ENCODE measurements at regions of chr11 and their contacts with region 1.

Region 1: GRCh38 chr11:62831520-62832335 is at the start of gene STX5:
- DNase-seq: peak; percentile 98
- ATAC-seq: peak; percentile 91
- H3K4me3 Mint-ChIP-seq: peak within 1 kb of the TSS; percentile 100
- H3K27ac Mint-ChIP-seq: peak within 1 kb of the TSS; percentile 100
- H3K4me1 Mint-ChIP-seq: peaks cover 47% of the 10 kb centered on the region
- H3K27me3 Mint-ChIP-seq: no peaks in the 10 kb centered on the region
- CTCF ChIP-seq: no peak
- total RNA-seq, gene STX5: 58.4 and 71.5 TPM in 2 replicates

Region 2: DNA sequence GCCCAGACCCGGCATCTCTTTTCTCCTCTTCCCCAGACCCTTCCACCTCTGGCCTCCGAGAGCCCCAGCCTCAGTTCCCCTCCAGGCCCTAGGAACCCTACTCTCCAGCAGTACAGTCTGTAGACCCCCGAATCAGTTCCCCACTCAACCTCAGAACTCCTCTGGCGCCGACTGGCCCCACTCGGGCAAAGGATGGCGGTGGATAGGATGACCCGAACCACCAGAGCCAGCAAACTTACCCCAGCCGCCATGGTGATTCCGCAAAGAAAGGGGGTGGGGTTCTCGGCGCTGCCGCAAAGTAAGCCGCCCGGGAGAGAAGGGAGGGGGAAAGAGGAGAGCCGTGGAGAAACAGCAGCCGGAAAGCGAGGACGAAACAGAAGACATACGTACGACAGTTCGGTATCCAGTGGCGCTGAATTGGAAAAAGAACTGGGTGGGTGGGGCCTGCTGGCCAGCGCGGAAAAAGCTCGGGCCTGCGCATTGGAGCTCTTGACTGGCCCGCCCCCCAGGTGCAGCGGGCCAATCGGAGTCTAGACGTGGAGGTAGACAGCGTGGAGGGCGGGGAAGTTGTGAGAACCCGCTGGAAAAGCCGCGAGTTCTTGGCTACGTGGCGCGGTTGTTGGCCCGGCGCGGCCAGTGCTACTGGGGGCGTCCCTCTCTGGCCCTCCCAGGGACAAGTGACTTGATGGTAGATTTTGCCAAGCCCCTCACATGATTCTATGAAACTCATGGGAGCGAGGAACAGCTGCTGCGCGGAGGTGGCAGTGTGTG is 258.0 kb before region 1 on chr11 and contains the start of gene EEF1G:
- CTCF ChIA-PET with region 1: no interaction called
- POLR2A ChIA-PET with region 1: interaction called, 3 read pairs
- intact Hi-C with region 1: loop called (anchors 5 kb)
- DNase-seq: peak; percentile 92
- ATAC-seq: peak; percentile 94
- H3K4me3 Mint-ChIP-seq: peak within 1 kb of the TSS; percentile 97
- H3K27ac Mint-ChIP-seq: peak within 1 kb of the TSS; percentile 94
- H3K4me1 Mint-ChIP-seq: peaks cover 51% of the 10 kb centered on the region
- H3K27me3 Mint-ChIP-seq: no peaks in the 10 kb centered on the region
- CTCF ChIP-seq: no peak
- total RNA-seq, gene EEF1G: 2,373 and 2,524 TPM in 2 replicates

Region 3: GRCh38 chr11:62678770-62679696 is 152.7 kb before region 1 on chr11 and contains the start of gene UBXN1:
- CTCF ChIA-PET with region 1: no interaction called
- POLR2A ChIA-PET with region 1: interaction called, 10 read pairs
- intact Hi-C with region 1: no loop called
- DNase-seq: peak; percentile 77
- ATAC-seq: peak; percentile 74
- H3K4me3 Mint-ChIP-seq: peak within 1 kb of the TSS; percentile 91
- H3K27ac Mint-ChIP-seq: peak within 1 kb of the TSS; percentile 96
- H3K4me1 Mint-ChIP-seq: peaks cover 41% of the 10 kb centered on the region
- H3K27me3 Mint-ChIP-seq: no peaks in the 10 kb centered on the region
- CTCF ChIP-seq: no peak
- total RNA-seq, gene UBXN1: 204 and 205 TPM in 2 replicates

Region 4: DNA sequence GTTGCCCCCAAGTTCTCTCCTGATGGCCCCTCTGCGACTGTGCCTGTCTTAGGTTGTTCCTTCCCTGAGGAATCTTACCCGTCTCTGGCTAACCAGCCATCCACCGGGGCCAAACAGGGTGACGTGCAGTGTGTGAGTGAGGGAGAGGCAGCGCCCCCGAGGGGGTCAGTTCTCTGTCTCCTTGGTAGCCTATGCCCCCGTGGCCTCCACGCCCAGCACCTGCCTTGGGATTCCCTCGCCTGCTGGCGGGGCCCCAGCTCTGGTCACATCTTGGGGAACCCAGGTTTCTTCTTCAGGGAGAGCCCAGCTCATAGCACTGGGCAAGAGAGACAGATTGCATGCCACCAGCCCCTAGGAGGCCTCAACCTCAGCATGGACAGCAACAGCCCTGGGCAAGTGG is 32.2 kb before region 1 on chr11:
- CTCF ChIA-PET with region 1: no interaction called
- POLR2A ChIA-PET with region 1: interaction called, 53 read pairs
- intact Hi-C with region 1: no loop called
- DNase-seq: no peak
- ATAC-seq: no peak
- H3K4me3 Mint-ChIP-seq: no peak overlapping the region
- H3K27ac Mint-ChIP-seq: no peak overlapping the region
- H3K4me1 Mint-ChIP-seq: peaks cover 19% of the 10 kb centered on the region
- H3K27me3 Mint-ChIP-seq: no peaks in the 10 kb centered on the region
- CTCF ChIP-seq: no peak

Region 5: GRCh38 chr11:62816557-62816956 is 15.2 kb before region 1 on chr11:
- CTCF ChIA-PET with region 1: no interaction called
- POLR2A ChIA-PET with region 1: interaction called, 16 read pairs
- intact Hi-C with region 1: no loop called
- DNase-seq: no peak
- ATAC-seq: no peak
- H3K4me3 Mint-ChIP-seq: no peak overlapping the region
- H3K27ac Mint-ChIP-seq: no peak overlapping the region
- H3K4me1 Mint-ChIP-seq: no peaks in the 10 kb centered on the region
- H3K27me3 Mint-ChIP-seq: no peaks in the 10 kb centered on the region
- CTCF ChIP-seq: no peak

Measured in activated B cell treated with CpG ODN at 0.5 μM for 24 hours (primary cell).